ENCODE measurements at regions of chr1 and their contacts with region 1.

Region 1: GRCh38 chr1:26078286-26079177 is 11.1 kb upstream of the TRIM63 start:
- DNase-seq: no peak
- H3K4me3 ChIP-seq: no peak overlapping the region
- H3K27ac ChIP-seq: no peak overlapping the region
- H3K4me1 ChIP-seq: no peaks in the 10 kb centered on the region
- H3K27me3 ChIP-seq: no peaks in the 10 kb centered on the region
- CTCF ChIP-seq: no peak
- POLR2A ChIP-seq: no peak

Region 2: GRCh38 chr1:26066857-26067256 is 11.7 kb before region 1 on chr1:
- intact Hi-C with region 1: loop called (anchors 1 kb)
- DNase-seq: no peak
- H3K4me3 ChIP-seq: peak overlapping the region in 1 of 3 donors; percentile 5
- H3K27ac ChIP-seq: no peak overlapping the region
- H3K4me1 ChIP-seq: no peaks in the 10 kb centered on the region
- H3K27me3 ChIP-seq: no peaks in the 10 kb centered on the region
- CTCF ChIP-seq: no peak
- POLR2A ChIP-seq: no peak

Region 3: DNA sequence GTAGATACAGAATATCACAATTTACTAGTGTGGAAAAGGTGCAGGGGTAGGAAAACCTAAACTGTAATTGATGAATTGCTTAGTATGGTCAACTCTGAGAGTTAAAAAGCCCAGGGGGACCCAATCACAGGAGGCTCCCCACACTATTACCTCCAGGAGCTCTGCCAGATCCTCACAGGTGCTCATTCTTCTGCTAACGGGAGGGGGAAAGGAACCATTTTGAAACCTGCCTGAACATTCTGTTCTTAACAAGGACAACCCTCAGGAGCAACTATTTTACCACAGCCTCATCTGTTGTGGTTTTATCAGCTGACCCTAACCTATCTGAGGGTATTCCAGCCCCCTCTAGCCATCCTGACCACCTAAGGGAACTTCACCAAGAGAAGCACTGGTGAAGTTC is 52.2 kb after region 1 on chr1:
- intact Hi-C with region 1: loop called (anchors 2 kb)
- DNase-seq: no peak
- H3K4me3 ChIP-seq: no peak overlapping the region
- H3K27ac ChIP-seq: no peak overlapping the region
- H3K4me1 ChIP-seq: no peaks in the 10 kb centered on the region
- H3K27me3 ChIP-seq: no peaks in the 10 kb centered on the region
- CTCF ChIP-seq: no peak
- POLR2A ChIP-seq: no peak